ENCODE measurements at regions of chr2 and their contacts with region 1.

Region 1: GRCh38 chr2:240560480-240561326 is 546 bp downstream of the DUSP28 start:
- DNase-seq: peak; percentile 98 to 100 (median 99)
- ATAC-seq: peak; percentile 79
- H3K4me3 ChIP-seq: peak overlapping the region; percentile 82
- H3K4me3 Mint-ChIP-seq: peak overlapping the region; percentile 81 to 96 (median 86)
- H3K27ac ChIP-seq: peak overlapping the region; percentile 93
- H3K27ac Mint-ChIP-seq: peak overlapping the region; percentile 85 to 97 (median 90)
- H3K4me1 ChIP-seq: peaks cover 72 to 74% of the 10 kb centered on the region in 2 donors
- H3K4me1 Mint-ChIP-seq: peaks cover 53 to 79% (median 76%) of the 10 kb centered on the region in 7 donors
- H3K27me3 ChIP-seq: no peaks in the 10 kb centered on the region
- H3K27me3 Mint-ChIP-seq: no peaks in the 10 kb centered on the region

Region 2: DNA sequence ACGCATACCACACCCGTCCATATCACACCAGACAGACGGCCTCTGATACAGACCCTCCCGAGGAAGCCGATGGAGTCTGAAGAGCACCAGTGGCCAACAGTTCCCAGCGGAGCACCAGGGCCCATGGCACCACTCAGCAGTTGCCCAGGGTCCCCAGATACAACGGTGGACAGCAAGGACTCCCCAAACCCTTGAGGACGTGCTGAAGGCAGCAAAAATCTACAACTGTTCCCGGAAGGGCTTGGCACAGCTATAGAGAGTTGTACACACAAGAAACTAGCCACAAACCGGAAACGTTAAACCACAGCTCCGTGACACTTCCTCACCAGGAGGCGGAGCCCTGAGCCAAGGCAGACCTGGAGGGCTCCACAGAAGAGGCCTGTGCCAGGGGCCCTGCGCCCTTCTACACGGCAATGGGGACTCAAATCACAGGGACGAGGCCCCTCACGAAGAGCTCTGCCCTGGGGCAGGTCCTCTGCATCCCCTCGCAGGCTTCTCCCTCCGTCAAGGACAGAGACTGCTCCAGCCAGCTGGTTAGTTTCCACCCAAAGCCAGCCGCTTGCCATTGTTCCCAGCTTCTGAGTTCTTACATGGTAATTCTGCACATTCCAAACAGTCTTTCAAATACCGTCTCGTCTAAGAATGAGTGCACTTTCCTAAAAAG is 1293.3 kb before region 1 on chr2:
- CTCF ChIA-PET with region 1: no interaction called
- POLR2A ChIA-PET with region 1: no interaction called
- intact Hi-C with region 1: loop called in 1 of 2 experiments (anchors 10 kb)
- DNase-seq: peak; percentile 74 to 96 (median 94)
- ATAC-seq: peak; percentile 88
- H3K4me3 ChIP-seq: peak overlapping the region; percentile 85
- H3K4me3 Mint-ChIP-seq: peak overlapping the region; percentile 90 to 99 (median 95)
- H3K27ac ChIP-seq: peak overlapping the region; percentile 74
- H3K27ac Mint-ChIP-seq: peak overlapping the region; percentile 88 to 99 (median 98)
- H3K4me1 ChIP-seq: peaks cover 57 to 74% of the 10 kb centered on the region in 2 donors
- H3K4me1 Mint-ChIP-seq: peaks cover 55 to 98% (median 85%) of the 10 kb centered on the region in 7 donors
- H3K27me3 ChIP-seq: no peaks in the 10 kb centered on the region
- H3K27me3 Mint-ChIP-seq: peaks cover 0 to 4% (median 0%) of the 10 kb centered on the region in 5 donors

Region 3: GRCh38 chr2:240325016-240325944 is 235.4 kb before region 1 on chr2:
- CTCF ChIA-PET with region 1: no interaction called
- POLR2A ChIA-PET with region 1: no interaction called
- intact Hi-C with region 1: no loop called
- DNase-seq: no peak
- ATAC-seq: no peak
- H3K4me3 ChIP-seq: no peak overlapping the region
- H3K4me3 Mint-ChIP-seq: no peak overlapping the region
- H3K27ac ChIP-seq: no peak overlapping the region
- H3K27ac Mint-ChIP-seq: no peak overlapping the region
- H3K4me1 ChIP-seq: no peaks in the 10 kb centered on the region
- H3K4me1 Mint-ChIP-seq: peaks cover 0 to 1% (median 0%) of the 10 kb centered on the region in 7 donors
- H3K27me3 ChIP-seq: no peaks in the 10 kb centered on the region
- H3K27me3 Mint-ChIP-seq: peaks cover 0 to 11% (median 7%) of the 10 kb centered on the region in 5 donors

Region 4: GRCh38 chr2:240513549-240514287 is 47.0 kb before region 1 on chr2:
- CTCF ChIA-PET with region 1: interaction called, 12 read pairs
- POLR2A ChIA-PET with region 1: interaction called, 5 read pairs
- intact Hi-C with region 1: loop called in 1 of 2 experiments (anchors 1 kb)
- DNase-seq: peak; percentile 57 to 82 (median 76)
- ATAC-seq: peak; percentile 99
- H3K4me3 ChIP-seq: no peak overlapping the region
- H3K4me3 Mint-ChIP-seq: peak overlapping the region in 3 of 10 donors; percentile 12 to 28 (median 13)
- H3K27ac ChIP-seq: no peak overlapping the region
- H3K27ac Mint-ChIP-seq: peak overlapping the region; percentile 9 to 76 (median 42)
- H3K4me1 ChIP-seq: peaks cover 6% of the 10 kb centered on the region in 2 donors
- H3K4me1 Mint-ChIP-seq: peaks cover 6 to 16% (median 12%) of the 10 kb centered on the region in 7 donors
- H3K27me3 ChIP-seq: no peaks in the 10 kb centered on the region
- H3K27me3 Mint-ChIP-seq: no peaks in the 10 kb centered on the region

Region 5: GRCh38 chr2:240624950-240625621 is 64.4 kb after region 1 on chr2 and contains the start of gene GPR35:
- CTCF ChIA-PET with region 1: interaction called, 3 read pairs
- POLR2A ChIA-PET with region 1: interaction called, 30 read pairs
- intact Hi-C with region 1: loop called (anchors 1 kb)
- DNase-seq: peak; percentile 34 to 88 (median 56)
- ATAC-seq: peak; percentile 86
- H3K4me3 ChIP-seq: peak within 1 kb of the TSS; percentile 24
- H3K4me3 Mint-ChIP-seq: peak within 1 kb of the TSS; percentile 57 to 83 (median 71)
- H3K27ac ChIP-seq: peak within 1 kb of the TSS; percentile 69
- H3K27ac Mint-ChIP-seq: peak within 1 kb of the TSS; percentile 47 to 93 (median 90)
- H3K4me1 ChIP-seq: peaks cover 59 to 76% of the 10 kb centered on the region in 2 donors
- H3K4me1 Mint-ChIP-seq: peaks cover 18 to 68% (median 54%) of the 10 kb centered on the region in 7 donors
- H3K27me3 ChIP-seq: no peaks in the 10 kb centered on the region
- H3K27me3 Mint-ChIP-seq: no peaks in the 10 kb centered on the region
- total RNA-seq, gene GPR35: 7.1 to 19.0 (median 10.2) TPM

Region 6: GRCh38 chr2:240685771-240686371 is 125.2 kb after region 1 on chr2:
- CTCF ChIA-PET with region 1: no interaction called
- POLR2A ChIA-PET with region 1: no interaction called
- intact Hi-C with region 1: no loop called
- DNase-seq: no peak
- ATAC-seq: no peak
- H3K4me3 ChIP-seq: no peak overlapping the region
- H3K4me3 Mint-ChIP-seq: no peak overlapping the region
- H3K27ac ChIP-seq: no peak overlapping the region
- H3K27ac Mint-ChIP-seq: peak overlapping the region in 2 of 9 donors; percentile 11 to 35
- H3K4me1 ChIP-seq: no peaks in the 10 kb centered on the region
- H3K4me1 Mint-ChIP-seq: peaks cover 0 to 9% (median 2%) of the 10 kb centered on the region in 7 donors
- H3K27me3 ChIP-seq: no peaks in the 10 kb centered on the region
- H3K27me3 Mint-ChIP-seq: no peaks in the 10 kb centered on the region

Region 7: GRCh38 chr2:241217320-241218031 is 656.8 kb after region 1 on chr2:
- CTCF ChIA-PET with region 1: no interaction called
- POLR2A ChIA-PET with region 1: no interaction called
- intact Hi-C with region 1: loop called (anchors 5 kb)
- DNase-seq: peak in 7 of 9 donors; percentile 10 to 50 (median 36)
- ATAC-seq: peak; percentile 53
- H3K4me3 ChIP-seq: peak overlapping the region; percentile 44
- H3K4me3 Mint-ChIP-seq: peak overlapping the region; percentile 62 to 89 (median 79)
- H3K27ac ChIP-seq: peak overlapping the region; percentile 17
- H3K27ac Mint-ChIP-seq: peak overlapping the region in 6 of 9 donors; percentile 21 to 66 (median 33)
- H3K4me1 ChIP-seq: peaks cover 0 to 6% of the 10 kb centered on the region in 2 donors
- H3K4me1 Mint-ChIP-seq: peaks cover 9 to 15% (median 11%) of the 10 kb centered on the region in 7 donors
- H3K27me3 ChIP-seq: no peaks in the 10 kb centered on the region
- H3K27me3 Mint-ChIP-seq: peaks cover 0 to 21% (median 0%) of the 10 kb centered on the region in 5 donors

Region 8: GRCh38 chr2:241609859-241610793 is 1049.4 kb after region 1 on chr2:
- CTCF ChIA-PET with region 1: no interaction called
- POLR2A ChIA-PET with region 1: no interaction called
- intact Hi-C with region 1: loop called (anchors 10 kb)
- DNase-seq: peak; percentile 87 to 92 (median 90)
- ATAC-seq: peak; percentile 99
- H3K4me3 ChIP-seq: peak overlapping the region; percentile 53
- H3K4me3 Mint-ChIP-seq: peak overlapping the region in 9 of 10 donors; percentile 61 to 79 (median 71)
- H3K27ac ChIP-seq: peak overlapping the region; percentile 61
- H3K27ac Mint-ChIP-seq: peak overlapping the region; percentile 9 to 95 (median 68)
- H3K4me1 ChIP-seq: peaks cover 14 to 17% of the 10 kb centered on the region in 2 donors
- H3K4me1 Mint-ChIP-seq: peaks cover 16 to 33% (median 24%) of the 10 kb centered on the region in 7 donors
- H3K27me3 ChIP-seq: no peaks in the 10 kb centered on the region
- H3K27me3 Mint-ChIP-seq: no peaks in the 10 kb centered on the region